SK-MEL-5 (cell line): ENCODE measurements at regions of chr2 and their contacts with region 1.

Region 1: GRCh38 chr2:17851731-17852585 is 26.5 kb upstream of the KCNS3 start:
- DNase-seq: peak; percentile 85

Region 2: DNA sequence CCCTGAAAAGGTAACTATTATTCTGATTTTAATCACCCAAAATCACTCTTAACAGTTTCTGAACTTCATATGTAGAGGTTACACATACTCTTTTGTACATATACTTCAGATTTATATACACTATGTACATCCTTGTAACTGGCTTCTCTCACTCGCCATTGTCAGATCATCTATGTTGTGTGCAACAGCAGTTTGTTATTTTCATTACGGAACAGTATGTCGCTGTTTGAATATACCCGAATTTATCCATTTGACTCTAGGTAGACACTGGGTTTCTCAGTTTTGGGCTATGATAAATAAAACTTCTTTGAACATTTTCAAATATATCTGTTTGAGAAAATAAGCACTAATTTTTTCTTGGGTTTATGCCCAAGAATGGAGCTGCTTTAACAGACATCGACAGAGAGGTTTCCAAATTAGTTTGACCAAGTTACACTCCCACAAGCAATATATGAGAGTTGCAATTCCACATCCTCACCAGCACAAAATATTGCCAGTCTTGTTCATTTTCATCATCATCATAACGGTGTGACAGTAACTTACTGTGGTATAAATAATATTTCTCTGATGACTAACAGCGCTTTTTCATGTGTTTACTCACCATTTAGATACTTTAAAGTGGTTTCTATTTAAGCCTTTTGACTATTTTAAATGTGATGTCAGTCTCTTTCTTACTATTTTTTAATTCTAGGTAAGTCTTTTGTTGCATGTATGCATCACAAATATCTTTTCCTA is 179.2 kb before region 1 on chr2:
- in situ Hi-C with region 1: no loop called
- DNase-seq: peak; percentile 29

Region 3: GRCh38 chr2:18149645-18150246 is 297.8 kb after region 1 on chr2:
- in situ Hi-C with region 1: loop called (anchors 25 kb)
- DNase-seq: peak; percentile 82